ENCODE measurements at regions of chr6 and their contacts with region 1.

Region 1: DNA sequence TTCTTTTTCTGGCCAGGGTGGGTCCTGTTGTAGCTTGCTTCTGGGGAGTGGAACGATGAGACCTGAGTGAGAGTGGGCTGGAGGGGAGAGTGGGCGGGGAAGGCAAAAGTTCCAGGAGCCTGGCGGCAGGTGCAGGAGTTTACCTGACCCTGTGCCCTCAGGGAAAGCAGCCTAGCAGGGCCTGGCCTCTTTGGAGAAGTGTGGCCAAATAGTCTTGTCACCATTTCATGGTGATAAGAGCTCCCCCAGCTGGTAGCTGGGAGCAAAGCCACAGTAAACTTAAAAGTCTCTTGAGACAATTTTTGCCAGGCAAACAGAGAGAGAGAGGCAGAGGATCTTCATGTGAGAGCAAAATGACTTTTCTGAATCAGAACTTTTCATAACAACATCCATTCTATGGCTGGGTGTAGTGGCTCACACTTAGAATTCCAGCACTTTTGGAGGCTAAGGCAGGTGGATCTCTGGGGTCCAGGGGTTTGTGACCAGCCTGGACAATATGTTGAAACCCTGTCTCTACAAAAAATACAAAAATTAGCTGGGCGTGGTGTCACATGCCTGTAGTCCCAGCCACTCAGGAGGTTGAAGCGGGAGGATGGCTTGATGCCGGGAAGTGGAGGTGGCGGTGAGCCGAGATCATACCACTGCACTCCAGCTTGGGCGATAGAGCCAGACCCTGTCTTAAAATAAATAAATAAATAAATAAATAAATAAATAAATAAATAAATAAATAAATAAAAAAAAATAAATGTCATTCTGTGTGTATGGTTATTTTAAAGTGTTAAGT is 161.8 kb upstream of the SCGN start:
- DNase-seq: peak; percentile 72
- H3K4me3 Mint-ChIP-seq: no peak overlapping the region
- H3K27ac Mint-ChIP-seq: no peak overlapping the region
- H3K4me1 Mint-ChIP-seq: no peaks in the 10 kb centered on the region
- H3K27me3 Mint-ChIP-seq: no peaks in the 10 kb centered on the region

Region 2: DNA sequence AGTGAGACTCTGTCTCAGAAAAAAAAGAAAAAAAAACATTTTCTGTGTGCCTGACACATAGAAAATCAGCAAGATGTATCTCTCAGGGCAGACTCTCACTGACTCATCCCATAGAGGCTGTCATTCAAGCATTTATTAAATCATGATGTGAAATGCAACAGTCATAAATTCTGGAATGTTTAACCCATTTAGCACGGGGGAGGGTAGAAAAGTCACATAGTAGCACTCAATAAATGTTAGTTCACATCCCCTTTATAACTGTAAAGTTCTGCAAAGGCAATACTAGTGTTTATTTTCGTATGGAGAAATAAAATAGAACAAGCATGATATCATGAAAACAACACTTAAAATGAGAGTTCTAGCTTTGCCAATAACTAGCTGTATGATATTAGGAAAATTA is 226.6 kb before region 1 on chr6:
- CTCF ChIA-PET with region 1: interaction called, 207 read pairs
- POLR2A ChIA-PET with region 1: no interaction called
- intact Hi-C with region 1: loop called (anchors 1 kb)
- DNase-seq: no peak
- H3K4me3 Mint-ChIP-seq: no peak overlapping the region
- H3K27ac Mint-ChIP-seq: no peak overlapping the region
- H3K4me1 Mint-ChIP-seq: no peaks in the 10 kb centered on the region
- H3K27me3 Mint-ChIP-seq: peaks cover 3% of the 10 kb centered on the region

Region 3: DNA sequence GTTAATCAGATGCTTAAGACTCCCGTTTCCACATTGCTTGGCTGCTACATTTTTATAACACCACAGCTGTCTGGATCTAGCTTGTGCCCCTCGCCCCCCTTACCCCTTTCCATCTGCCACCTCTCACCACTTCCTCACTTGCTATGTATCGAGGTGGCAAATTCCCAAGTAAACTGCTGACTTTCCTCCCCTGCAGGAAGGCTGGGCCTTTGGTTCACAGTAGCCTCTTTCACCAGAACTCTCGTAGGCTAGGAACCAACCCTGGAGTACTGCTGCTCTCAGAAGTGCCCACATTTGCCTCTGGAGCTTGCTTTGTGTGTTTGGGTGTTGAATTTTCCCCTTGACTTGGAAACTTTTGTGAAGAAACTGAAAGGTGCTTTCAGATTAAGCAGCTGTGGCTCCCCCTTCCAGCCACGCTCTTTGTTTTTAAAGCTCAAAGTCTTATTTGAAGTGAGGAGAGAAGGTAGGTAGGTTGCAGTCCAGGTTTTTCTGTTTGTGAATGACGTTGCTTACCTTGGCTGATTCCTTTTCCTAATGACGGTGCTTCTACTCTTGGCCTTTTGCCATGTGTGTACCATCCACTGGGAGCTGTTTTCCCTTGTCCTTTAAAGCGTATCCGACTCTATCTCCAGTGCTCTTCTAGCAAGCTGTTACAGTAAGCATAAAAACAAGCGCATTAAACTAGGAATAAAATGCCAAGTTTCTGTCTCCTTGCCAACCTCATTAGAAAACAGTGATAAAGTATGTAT is 120.6 kb before region 1 on chr6:
- CTCF ChIA-PET with region 1: interaction called, 12 read pairs
- POLR2A ChIA-PET with region 1: no interaction called
- intact Hi-C with region 1: no loop called
- DNase-seq: peak; percentile 27
- H3K4me3 Mint-ChIP-seq: peak overlapping the region; percentile 61
- H3K27ac Mint-ChIP-seq: peak overlapping the region; percentile 59
- H3K4me1 Mint-ChIP-seq: peaks cover 61% of the 10 kb centered on the region
- H3K27me3 Mint-ChIP-seq: no peaks in the 10 kb centered on the region

Region 4: GRCh38 chr6:25511376-25511775 is 21.2 kb after region 1 on chr6:
- CTCF ChIA-PET with region 1: interaction called, 30 read pairs
- POLR2A ChIA-PET with region 1: no interaction called
- intact Hi-C with region 1: no loop called
- DNase-seq: no peak
- H3K4me3 Mint-ChIP-seq: no peak overlapping the region
- H3K27ac Mint-ChIP-seq: no peak overlapping the region
- H3K4me1 Mint-ChIP-seq: no peaks in the 10 kb centered on the region
- H3K27me3 Mint-ChIP-seq: no peaks in the 10 kb centered on the region

Region 5: GRCh38 chr6:25942561-25943147 is 452.4 kb after region 1 on chr6:
- CTCF ChIA-PET with region 1: interaction called, 3 read pairs
- POLR2A ChIA-PET with region 1: no interaction called
- intact Hi-C with region 1: loop called (anchors 2 kb)
- DNase-seq: no peak
- H3K4me3 Mint-ChIP-seq: no peak overlapping the region
- H3K27ac Mint-ChIP-seq: no peak overlapping the region
- H3K4me1 Mint-ChIP-seq: peaks cover 25% of the 10 kb centered on the region
- H3K27me3 Mint-ChIP-seq: peaks cover 4% of the 10 kb centered on the region

Measured in activated CD4-positive, alpha-beta memory T cell treated with anti-CD3 and anti-CD28 coated beads for 36 hours (primary cell).